H1 (cell line): ENCODE measurements at regions of chr9 and their contacts with region 1.

Region 1: GRCh38 chr9:129320575-129321263 is 142.7 kb upstream of the IER5L start:
- DNase-seq: peak in 1 of 2 experiments; percentile 77
- H3K4me3 ChIP-seq: peak overlapping the region; percentile 8 to 54 (median 23); a peak in 5 of 8 replicates
- H3K27ac ChIP-seq: no peak overlapping the region
- H3K4me1 ChIP-seq: peaks cover 0 to 19% (median 12%) of the 10 kb centered on the region in 4 experiments; a peak in 6 of 7 replicates
- H3K27me3 ChIP-seq: peaks cover 0 to 7% (median 5%) of the 10 kb centered on the region in 4 experiments; a peak in 4 of 7 replicates
- CTCF ChIP-seq: no peak
- EP300 ChIP-seq: no peak
- POLR2A ChIP-seq: no peak
- RAD21 ChIP-seq: peak in 1 of 2 experiments; percentile 23; a peak in 2 of 4 replicates

Region 2: DNA sequence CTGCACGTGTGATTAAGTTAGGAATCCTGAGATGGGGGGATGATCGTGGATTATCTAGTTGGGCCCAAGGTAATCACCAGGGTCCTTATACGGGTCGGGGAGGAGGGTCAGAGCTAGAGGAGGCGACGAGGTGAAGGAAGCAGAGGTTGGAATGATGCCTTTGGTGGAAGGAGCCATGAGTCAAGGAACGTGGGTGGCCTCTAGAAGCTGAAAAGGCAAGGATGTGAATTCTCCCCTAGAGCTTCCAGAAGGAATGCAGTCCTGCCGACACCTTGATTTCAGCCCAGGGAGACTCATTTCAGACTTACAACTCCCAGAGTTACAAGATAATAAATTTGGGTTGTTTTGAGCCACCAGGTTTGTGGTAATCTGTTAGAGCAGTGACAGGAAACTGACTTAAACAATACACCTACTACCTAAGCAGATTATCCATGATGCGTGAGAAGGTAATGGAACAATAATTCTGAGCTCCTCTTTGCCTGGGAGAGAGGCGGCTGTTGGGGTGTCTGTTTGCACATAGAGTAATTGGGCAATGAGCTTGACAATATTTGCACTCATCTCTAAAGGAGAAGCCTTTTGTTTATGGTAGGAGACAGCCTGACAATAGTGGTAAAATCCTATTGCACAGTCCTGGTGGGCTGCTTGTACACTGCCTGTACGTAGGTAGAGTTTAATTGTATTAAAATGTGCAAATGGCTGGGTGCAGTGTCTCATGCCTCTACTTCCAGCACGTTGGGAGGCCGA is 13.3 kb before region 1 on chr9:
- CTCF ChIA-PET with region 1: interaction called, 12 read pairs
- POLR2A ChIA-PET with region 1: interaction called, 3 read pairs
- DNase-seq: no peak
- H3K4me3 ChIP-seq: no peak overlapping the region
- H3K27ac ChIP-seq: no peak overlapping the region
- H3K4me1 ChIP-seq: peaks cover 0 to 3% (median 0%) of the 10 kb centered on the region in 4 experiments; a peak in 2 of 7 replicates
- H3K27me3 ChIP-seq: no peaks in the 10 kb centered on the region; a peak in 1 of 7 replicates
- CTCF ChIP-seq: no peak
- EP300 ChIP-seq: no peak
- POLR2A ChIP-seq: no peak
- RAD21 ChIP-seq: no peak

Region 3: GRCh38 chr9:129352146-129352865 is 31.6 kb after region 1 on chr9:
- CTCF ChIA-PET with region 1: interaction called, 5 read pairs
- POLR2A ChIA-PET with region 1: interaction called, 13 read pairs
- DNase-seq: peak; percentile 61 to 93
- H3K4me3 ChIP-seq: peak overlapping the region; percentile 47 to 82 (median 56)
- H3K27ac ChIP-seq: peak overlapping the region; percentile 21; the same call in 1 of the 2 replicates
- H3K4me1 ChIP-seq: peaks cover 0 to 19% (median 8%) of the 10 kb centered on the region in 4 experiments; a peak in 4 of 7 replicates
- H3K27me3 ChIP-seq: no peaks in the 10 kb centered on the region; a peak in 1 of 7 replicates
- CTCF ChIP-seq: no peak
- EP300 ChIP-seq: peak in 1 of 2 experiments; percentile 3; a peak in 1 of 3 replicates
- POLR2A ChIP-seq: no peak
- RAD21 ChIP-seq: no peak